SK-N-SH (cell line): ENCODE measurements at regions of chr21 and their contacts with region 1.

Region 1: GRCh38 chr21:33324291-33325221 is at the start of gene IFNAR1:
- DNase-seq: peak; percentile 99
- H3K4me3 ChIP-seq: peak within 1 kb of the TSS; percentile 68 to 97
- H3K27ac ChIP-seq: peak within 1 kb of the TSS; percentile 87 to 90
- H3K4me1 ChIP-seq: peaks cover 3 to 12% of the 10 kb centered on the region in 2 experiments; a peak in 1 of 4 replicates
- H3K27me3 ChIP-seq: no peaks in the 10 kb centered on the region
- CTCF ChIP-seq: peak; percentile 14; the same call in 1 of the 2 replicates
- EP300 ChIP-seq: no peak
- RAD21 ChIP-seq: peak; percentile 4; the same call in 1 of the 2 replicates
- polyA plus RNA-seq, gene IFNAR1: 7.9 and 12.2 TPM in 2 replicates

Region 2: GRCh38 chr21:33266050-33266788 is 58.3 kb before region 1 on chr21 and contains the start of gene IL10RB:
- CTCF ChIA-PET with region 1: interaction called, 4 read pairs
- POLR2A ChIA-PET with region 1: interaction called, 13 read pairs
- DNase-seq: peak; percentile 96
- H3K4me3 ChIP-seq: peak within 1 kb of the TSS; percentile 73 to 96
- H3K27ac ChIP-seq: peak within 1 kb of the TSS; percentile 50 to 51; a peak in 2 of 4 replicates
- H3K4me1 ChIP-seq: peaks cover 0 to 17% of the 10 kb centered on the region in 2 experiments; a peak in 1 of 4 replicates
- H3K27me3 ChIP-seq: no peaks in the 10 kb centered on the region
- CTCF ChIP-seq: no peak
- EP300 ChIP-seq: no peak
- RAD21 ChIP-seq: no peak
- polyA plus RNA-seq, gene IL10RB: 19.8 and 20.1 TPM in 2 replicates